Endothelial cell of umbilical vein (primary cell): ENCODE measurements at regions of chr6 and their contacts with region 1.

Region 1: DNA sequence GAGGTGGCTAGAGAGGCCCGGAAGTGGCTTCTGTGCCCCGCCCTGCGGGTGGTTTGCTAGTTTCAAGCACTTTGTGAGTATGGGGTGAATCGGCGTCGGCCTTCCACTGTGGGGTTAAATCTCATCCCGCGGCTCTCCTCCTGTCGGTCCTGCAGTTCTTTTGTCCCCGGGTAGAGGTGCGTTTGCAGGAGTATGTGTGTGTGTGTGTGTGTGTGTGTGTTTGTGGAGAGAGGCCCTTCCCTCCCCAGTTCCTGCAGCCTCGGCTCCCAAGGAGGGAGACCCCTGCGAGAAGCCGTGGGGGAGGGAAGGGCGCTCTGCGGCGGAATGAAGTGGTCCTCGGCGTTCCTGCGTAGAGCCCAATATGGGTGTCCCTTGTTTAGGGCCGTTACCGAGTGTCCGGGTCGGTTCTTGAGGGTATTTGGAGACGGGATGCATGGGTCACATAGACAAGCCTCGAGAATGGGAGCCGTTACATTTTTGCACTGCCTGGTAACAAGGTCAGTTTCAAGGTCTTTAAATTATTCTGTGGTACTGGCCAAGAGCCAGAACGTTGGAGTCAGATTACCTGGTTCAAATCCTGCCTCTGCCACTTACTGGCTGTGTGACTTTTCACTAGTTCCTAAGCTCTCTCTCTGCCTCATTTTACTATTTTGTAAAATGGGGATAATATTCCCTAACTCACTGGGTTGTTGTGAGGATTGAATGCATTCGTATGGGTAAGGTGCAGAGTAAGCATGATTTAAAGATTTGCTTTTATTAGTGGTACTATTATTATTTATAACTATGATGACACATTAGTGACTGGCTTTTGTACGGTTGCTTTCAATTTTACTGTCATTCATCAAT is at the start of gene ZKSCAN3:
- DNase-seq: peak; percentile 76
- H3K4me3 ChIP-seq: peak within 1 kb of the TSS; percentile 80 to 89 (median 86)
- H3K27ac ChIP-seq: peak within 1 kb of the TSS; percentile 60
- H3K4me1 ChIP-seq: peaks cover 24% of the 10 kb centered on the region
- H3K27me3 ChIP-seq: no peaks in the 10 kb centered on the region
- CTCF ChIP-seq: no peak
- POLR2A ChIP-seq: peak; percentile 85
- total RNA-seq, gene ZKSCAN3: 4.9 and 6.9 TPM in 2 replicates

Region 2: DNA sequence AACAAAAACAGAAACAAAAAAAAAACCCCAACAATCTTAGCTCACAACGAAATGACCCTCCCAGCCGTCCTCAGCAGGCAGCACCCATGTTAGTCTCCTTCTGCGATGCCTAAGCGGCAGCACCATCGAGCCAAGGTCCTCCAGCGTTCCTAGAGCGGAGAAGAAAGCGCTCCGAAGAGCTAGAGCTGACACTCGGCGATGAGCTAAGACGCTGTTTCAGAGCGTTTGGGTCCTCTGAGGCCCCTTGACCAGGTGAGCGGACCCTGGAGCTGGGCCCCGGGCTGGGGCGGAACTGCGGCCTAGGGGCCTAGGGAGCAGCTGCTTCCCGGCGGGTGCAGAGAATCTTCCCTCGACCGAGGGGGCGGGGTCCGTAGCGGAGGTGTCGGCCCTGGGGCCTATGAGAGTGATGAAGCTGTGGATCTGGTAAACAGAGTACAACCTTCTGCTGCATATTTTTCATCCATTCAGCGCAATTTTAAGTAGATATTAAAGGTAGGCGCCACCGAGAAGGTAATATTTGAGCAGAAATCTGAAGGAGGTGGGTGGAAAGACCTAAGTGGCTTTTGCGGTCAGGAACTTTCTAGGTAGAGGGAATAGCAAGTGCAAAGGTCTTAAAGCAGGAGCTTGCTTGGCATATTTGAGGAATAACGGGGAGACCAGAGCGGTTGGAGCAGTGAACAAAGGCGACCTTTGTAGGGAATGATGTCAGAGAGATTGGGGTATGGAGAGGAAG is 83.0 kb before region 1 on chr6 and contains the start of gene ZSCAN26:
- CTCF ChIA-PET with region 1: interaction called, 9 read pairs
- POLR2A ChIA-PET with region 1: no interaction called
- dilution Hi-C with region 1: no loop called
- intact Hi-C with region 1: loop called (anchors 2 kb)
- DNase-seq: peak; percentile 92
- H3K4me3 ChIP-seq: peak within 1 kb of the TSS; percentile 73 to 96 (median 85)
- H3K27ac ChIP-seq: peak within 1 kb of the TSS; percentile 71
- H3K4me1 ChIP-seq: peaks cover 35% of the 10 kb centered on the region
- H3K27me3 ChIP-seq: peaks cover 0 to 3% of the 10 kb centered on the region in 2 experiments
- CTCF ChIP-seq: no peak
- POLR2A ChIP-seq: peak; percentile 81
- total RNA-seq, gene ZSCAN26: 12.7 and 14.1 TPM in 2 replicates